ENCODE measurements at regions of chr2 and their contacts with region 1.

Region 1: DNA sequence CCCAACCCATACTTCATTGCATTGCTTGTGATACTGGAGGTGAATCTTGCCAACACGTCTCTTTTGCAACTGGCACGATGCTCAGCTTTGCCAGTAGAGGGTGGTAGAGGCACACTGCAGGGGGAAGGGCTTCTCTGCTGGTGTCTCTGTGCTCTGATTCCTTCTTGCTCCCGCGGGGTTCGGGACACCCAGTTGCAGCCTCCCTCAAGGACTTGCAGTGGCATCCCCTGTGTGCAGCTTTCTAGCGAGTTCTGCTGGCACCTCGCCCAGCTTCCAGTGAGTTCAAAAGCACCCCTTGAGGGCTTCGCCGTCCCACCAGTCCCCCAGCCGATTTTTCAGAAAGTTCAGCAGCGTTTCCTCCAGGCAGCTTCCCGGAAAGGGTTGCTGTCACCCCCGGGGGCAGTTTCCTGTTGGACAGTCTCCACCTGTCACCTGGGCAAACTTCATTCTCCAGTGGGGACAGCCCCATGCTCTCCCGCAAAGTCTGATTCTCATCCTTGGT is 35.3 kb upstream of the EN1 start:
- DNase-seq: peak; percentile 39 to 70
- ATAC-seq: peak; percentile 77 to 92 (median 84)
- H3K4me3 ChIP-seq: peak overlapping the region; percentile 27
- H3K27ac ChIP-seq: no peak overlapping the region
- H3K4me1 ChIP-seq: no peaks in the 10 kb centered on the region
- H3K27me3 ChIP-seq: peaks cover 0 to 13% (median 3%) of the 10 kb centered on the region in 3 donors
- CTCF ChIP-seq: peak; percentile 72

Region 2: GRCh38 chr2:119111115-119112017 is 228.6 kb after region 1 on chr2:
- intact Hi-C with region 1: no loop called
- DNase-seq: no peak
- ATAC-seq: no peak
- H3K4me3 ChIP-seq: no peak overlapping the region
- H3K27ac ChIP-seq: no peak overlapping the region
- H3K4me1 ChIP-seq: no peaks in the 10 kb centered on the region
- H3K27me3 ChIP-seq: peaks cover 0 to 17% (median 3%) of the 10 kb centered on the region in 3 donors
- CTCF ChIP-seq: no peak

Region 3: GRCh38 chr2:119174216-119175037 is 291.7 kb after region 1 on chr2:
- intact Hi-C with region 1: loop called in 1 of 2 experiments (anchors 5 kb)
- DNase-seq: peak in 1 of 2 donors; percentile 45
- ATAC-seq: peak in 3 of 4 donors; percentile 65 to 71 (median 66)
- H3K4me3 ChIP-seq: no peak overlapping the region
- H3K27ac ChIP-seq: no peak overlapping the region
- H3K4me1 ChIP-seq: no peaks in the 10 kb centered on the region
- H3K27me3 ChIP-seq: no peaks in the 10 kb centered on the region
- CTCF ChIP-seq: peak; percentile 54

Region 4: GRCh38 chr2:119290859-119291587 is 408.3 kb after region 1 on chr2:
- intact Hi-C with region 1: loop called in 1 of 2 experiments (anchors 5 kb)
- DNase-seq: peak; percentile 74 to 86
- ATAC-seq: peak; percentile 83 to 85 (median 83)
- H3K4me3 ChIP-seq: no peak overlapping the region
- H3K27ac ChIP-seq: no peak overlapping the region
- H3K4me1 ChIP-seq: peaks cover 12% of the 10 kb centered on the region
- H3K27me3 ChIP-seq: no peaks in the 10 kb centered on the region
- CTCF ChIP-seq: peak; percentile 85

Region 5: DNA sequence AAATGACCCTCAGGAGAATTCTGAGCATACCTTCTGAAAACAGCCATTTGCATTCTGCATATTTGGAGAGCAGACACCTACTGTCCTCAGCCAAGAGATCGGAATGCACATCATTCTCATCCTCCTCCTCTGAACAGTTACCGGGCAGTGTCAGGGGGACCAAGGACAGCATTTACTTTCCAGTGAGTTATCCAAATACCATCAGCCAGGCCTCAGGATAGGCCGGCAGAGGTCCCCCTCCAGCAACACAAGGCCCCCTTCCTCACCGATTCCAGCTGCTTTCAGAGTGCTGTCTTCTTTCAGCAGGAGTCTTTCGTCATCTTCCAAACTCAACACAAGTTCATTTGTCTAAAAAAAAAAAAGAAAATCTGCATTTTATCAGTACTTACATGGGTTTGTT is 428.6 kb after region 1 on chr2:
- intact Hi-C with region 1: loop called (anchors 5 kb)
- DNase-seq: no peak
- ATAC-seq: no peak
- H3K4me3 ChIP-seq: no peak overlapping the region
- H3K27ac ChIP-seq: no peak overlapping the region
- H3K4me1 ChIP-seq: peaks cover 11% of the 10 kb centered on the region
- H3K27me3 ChIP-seq: no peaks in the 10 kb centered on the region
- CTCF ChIP-seq: no peak

Region 6: DNA sequence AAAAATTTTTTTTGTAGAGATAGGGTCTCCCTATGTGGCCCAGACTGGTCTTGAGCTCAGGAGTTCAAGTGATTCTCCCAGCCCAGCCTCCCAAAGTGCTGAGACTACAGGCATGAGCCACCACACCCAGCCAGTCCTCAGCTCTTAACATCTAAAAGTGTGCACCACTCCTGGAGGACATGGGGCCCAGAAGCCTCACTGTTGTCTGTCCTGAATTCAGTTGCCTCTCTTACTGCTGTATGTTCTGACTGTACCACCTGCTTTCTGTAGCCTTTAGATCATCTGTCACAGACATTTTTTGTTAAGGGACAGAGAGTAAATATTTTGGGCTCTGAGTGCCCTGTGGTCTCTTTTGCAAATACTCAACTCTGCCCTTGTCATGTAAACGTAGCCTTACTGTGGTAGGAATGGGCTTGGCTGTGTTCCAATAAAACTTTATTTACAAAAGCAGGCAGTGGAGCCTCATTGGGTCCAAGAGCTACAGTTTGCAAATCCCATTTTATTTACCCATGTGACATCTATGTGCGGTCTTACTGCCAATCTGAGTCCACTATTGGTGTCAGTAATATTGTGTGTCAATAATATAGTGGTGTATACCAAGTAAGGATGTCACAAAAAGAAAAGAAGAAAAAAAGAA is 587.0 kb after region 1 on chr2:
- intact Hi-C with region 1: loop called in 1 of 2 experiments (anchors 5 kb)
- DNase-seq: no peak
- ATAC-seq: no peak
- H3K4me3 ChIP-seq: no peak overlapping the region
- H3K27ac ChIP-seq: no peak overlapping the region
- H3K4me1 ChIP-seq: peaks cover 5% of the 10 kb centered on the region
- H3K27me3 ChIP-seq: no peaks in the 10 kb centered on the region
- CTCF ChIP-seq: no peak